ENCODE measurements at regions of chr5 and their contacts with region 1.

Region 1: DNA sequence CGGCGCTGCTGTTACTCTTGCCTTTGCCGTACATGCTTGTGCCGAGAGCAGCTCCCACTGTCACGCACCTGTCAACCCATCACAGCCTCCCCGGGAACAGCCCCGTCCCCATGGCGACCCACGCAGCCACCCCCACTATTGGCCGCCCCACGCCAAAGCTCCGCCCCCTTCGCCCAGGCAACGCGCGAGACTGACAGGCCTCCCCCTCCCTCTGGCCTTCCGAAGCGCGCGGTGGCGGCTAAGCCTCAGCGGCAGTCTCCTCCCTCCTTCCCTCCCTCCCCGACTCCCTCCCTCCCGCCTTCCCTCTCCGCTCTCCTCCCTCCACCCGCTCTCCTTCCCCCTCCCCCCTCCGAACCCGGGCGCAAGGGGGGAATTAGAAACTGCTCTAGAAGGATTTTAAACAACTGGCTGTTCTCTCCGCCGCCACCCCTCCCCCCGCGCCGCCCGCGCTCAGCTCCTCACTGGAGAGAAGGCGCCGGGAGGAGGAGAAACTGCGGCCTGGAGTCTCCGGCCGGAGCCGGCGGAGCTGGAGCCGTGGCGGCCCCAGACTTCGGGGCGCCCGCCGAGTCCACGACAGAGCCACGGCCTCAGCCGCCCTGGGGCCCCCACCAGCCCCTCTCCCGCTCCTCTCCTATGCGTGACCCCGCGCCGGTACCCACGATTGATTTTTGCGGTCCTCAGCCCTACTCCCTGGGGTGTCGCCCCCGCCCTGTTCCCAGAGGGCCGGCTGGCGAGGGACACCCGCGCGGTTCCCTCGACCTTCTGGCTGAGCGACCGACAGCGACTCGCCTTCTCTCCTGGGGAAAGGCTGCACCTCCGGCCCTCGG is at the start of gene SSBP2:
- DNase-seq: peak; percentile 98
- H3K4me3 ChIP-seq: peak within 1 kb of the TSS; percentile 86
- H3K4me3 Mint-ChIP-seq: peak within 1 kb of the TSS; percentile 86
- H3K27ac Mint-ChIP-seq: peak within 1 kb of the TSS; percentile 10
- H3K4me1 ChIP-seq: peaks cover 21% of the 10 kb centered on the region
- H3K4me1 Mint-ChIP-seq: peaks cover 11% of the 10 kb centered on the region
- H3K27me3 ChIP-seq: no peaks in the 10 kb centered on the region
- H3K27me3 Mint-ChIP-seq: peaks cover 8% of the 10 kb centered on the region
- CTCF ChIP-seq: no peak
- total RNA-seq, gene SSBP2: 2.5 and 3.3 TPM in 2 replicates

Region 2: GRCh38 chr5:81425569-81425968 is 325.7 kb before region 1 on chr5:
- CTCF ChIA-PET with region 1: interaction called, 6 read pairs
- POLR2A ChIA-PET with region 1: no interaction called
- intact Hi-C with region 1: loop called (anchors 5 kb)
- DNase-seq: peak in 1 of 2 experiments; percentile 25
- H3K4me3 ChIP-seq: no peak overlapping the region
- H3K4me3 Mint-ChIP-seq: no peak overlapping the region
- H3K27ac Mint-ChIP-seq: no peak overlapping the region
- H3K4me1 ChIP-seq: peaks cover 19% of the 10 kb centered on the region
- H3K4me1 Mint-ChIP-seq: peaks cover 19% of the 10 kb centered on the region
- H3K27me3 ChIP-seq: no peaks in the 10 kb centered on the region
- H3K27me3 Mint-ChIP-seq: no peaks in the 10 kb centered on the region
- CTCF ChIP-seq: peak; percentile 45 to 57

Region 3: DNA sequence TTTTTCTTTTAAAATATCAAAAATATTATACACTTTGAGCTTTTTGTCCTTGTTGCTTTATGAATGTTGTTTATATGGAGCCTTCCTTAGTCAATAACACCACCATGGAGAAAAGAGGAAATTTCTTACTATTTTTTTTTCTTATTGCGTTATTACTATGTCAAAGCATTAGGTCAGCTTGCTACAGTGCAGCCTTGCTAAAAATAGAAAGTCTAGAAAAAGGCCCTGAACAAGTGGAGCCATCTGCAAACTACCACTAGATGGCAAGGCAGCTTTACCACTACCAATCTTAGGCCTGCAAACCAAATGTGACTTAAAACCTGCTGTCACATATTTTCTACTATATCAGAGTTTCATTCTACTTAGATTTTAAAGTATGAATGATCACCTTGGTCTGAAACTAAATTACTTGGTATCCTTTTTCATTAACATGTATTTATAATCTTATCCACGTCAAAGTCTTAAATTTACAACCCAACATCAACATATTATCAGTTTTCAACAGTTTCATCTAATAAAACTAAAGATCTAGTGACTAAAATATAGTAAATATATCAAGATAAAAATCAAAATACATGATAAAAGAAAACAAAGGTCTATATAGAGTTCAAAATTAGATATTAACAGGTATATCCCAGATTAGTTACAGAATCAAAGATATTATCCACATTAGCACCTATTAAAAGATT is 244.2 kb before region 1 on chr5:
- CTCF ChIA-PET with region 1: no interaction called
- POLR2A ChIA-PET with region 1: no interaction called
- intact Hi-C with region 1: loop called (anchors 1 kb)
- DNase-seq: peak; percentile 47 to 63
- H3K4me3 ChIP-seq: no peak overlapping the region
- H3K4me3 Mint-ChIP-seq: no peak overlapping the region
- H3K27ac Mint-ChIP-seq: no peak overlapping the region
- H3K4me1 ChIP-seq: no peaks in the 10 kb centered on the region; the same call in 1 of the 2 replicates
- H3K4me1 Mint-ChIP-seq: peaks cover 7% of the 10 kb centered on the region
- H3K27me3 ChIP-seq: no peaks in the 10 kb centered on the region
- H3K27me3 Mint-ChIP-seq: peaks cover 2% of the 10 kb centered on the region
- CTCF ChIP-seq: peak; percentile 65 to 96

Region 4: GRCh38 chr5:81787474-81788242 is 36.4 kb after region 1 on chr5:
- CTCF ChIA-PET with region 1: no interaction called
- POLR2A ChIA-PET with region 1: no interaction called
- intact Hi-C with region 1: loop called (anchors 2 kb)
- DNase-seq: no peak
- H3K4me3 ChIP-seq: no peak overlapping the region
- H3K4me3 Mint-ChIP-seq: no peak overlapping the region
- H3K27ac Mint-ChIP-seq: no peak overlapping the region
- H3K4me1 ChIP-seq: no peaks in the 10 kb centered on the region
- H3K4me1 Mint-ChIP-seq: no peaks in the 10 kb centered on the region
- H3K27me3 ChIP-seq: no peaks in the 10 kb centered on the region
- H3K27me3 Mint-ChIP-seq: no peaks in the 10 kb centered on the region
- CTCF ChIP-seq: no peak

Region 5: GRCh38 chr5:81851481-81852178 is 100.4 kb after region 1 on chr5:
- CTCF ChIA-PET with region 1: interaction called, 23 read pairs
- POLR2A ChIA-PET with region 1: interaction called, 32 read pairs
- intact Hi-C with region 1: loop called (anchors 1 kb)
- DNase-seq: peak; percentile 92 to 95
- H3K4me3 ChIP-seq: peak overlapping the region; percentile 35
- H3K4me3 Mint-ChIP-seq: peak overlapping the region; percentile 86
- H3K27ac Mint-ChIP-seq: peak overlapping the region; percentile 95
- H3K4me1 ChIP-seq: peaks cover 8% of the 10 kb centered on the region
- H3K4me1 Mint-ChIP-seq: peaks cover 11% of the 10 kb centered on the region
- H3K27me3 ChIP-seq: no peaks in the 10 kb centered on the region
- H3K27me3 Mint-ChIP-seq: no peaks in the 10 kb centered on the region
- CTCF ChIP-seq: no peak

Region 6: GRCh38 chr5:81971712-81972495 is 220.7 kb after region 1 on chr5 and contains the start of gene ATG10:
- CTCF ChIA-PET with region 1: no interaction called
- POLR2A ChIA-PET with region 1: no interaction called
- intact Hi-C with region 1: loop called (anchors 2 kb)
- DNase-seq: peak; percentile 90 to 94
- H3K4me3 ChIP-seq: peak within 1 kb of the TSS; percentile 80
- H3K4me3 Mint-ChIP-seq: peak within 1 kb of the TSS; percentile 84
- H3K27ac Mint-ChIP-seq: peak within 1 kb of the TSS; percentile 81
- H3K4me1 ChIP-seq: peaks cover 3% of the 10 kb centered on the region; the same call in 1 of the 2 replicates
- H3K4me1 Mint-ChIP-seq: peaks cover 13% of the 10 kb centered on the region
- H3K27me3 ChIP-seq: no peaks in the 10 kb centered on the region
- H3K27me3 Mint-ChIP-seq: no peaks in the 10 kb centered on the region
- CTCF ChIP-seq: no peak
- total RNA-seq, gene ATG10: 5.4 and 5.8 TPM in 2 replicates